Calu3 (cell line): ENCODE measurements at regions of chr5 and their contacts with region 1.

Region 1: GRCh38 chr5:177311723-177312648 is at the start of gene MXD3:
- DNase-seq: peak; percentile 99
- H3K4me3 Mint-ChIP-seq: peak within 1 kb of the TSS; percentile 71
- H3K27ac Mint-ChIP-seq: peak within 1 kb of the TSS; percentile 79
- H3K4me1 Mint-ChIP-seq: peaks cover 42% of the 10 kb centered on the region
- H3K27me3 Mint-ChIP-seq: no peaks in the 10 kb centered on the region
- CTCF ChIP-seq: no peak
- total RNA-seq, gene MXD3: 24.3 and 36.3 TPM in 2 replicates

Region 2: GRCh38 chr5:177336112-177336511 is 24.1 kb after region 1 on chr5:
- CTCF ChIA-PET with region 1: no interaction called
- intact Hi-C with region 1: no loop called
- DNase-seq: peak; percentile 63
- H3K4me3 Mint-ChIP-seq: no peak overlapping the region
- H3K27ac Mint-ChIP-seq: peak overlapping the region; percentile 19
- H3K4me1 Mint-ChIP-seq: peaks cover 31% of the 10 kb centered on the region
- H3K27me3 Mint-ChIP-seq: no peaks in the 10 kb centered on the region
- CTCF ChIP-seq: peak; percentile 61

Region 3: DNA sequence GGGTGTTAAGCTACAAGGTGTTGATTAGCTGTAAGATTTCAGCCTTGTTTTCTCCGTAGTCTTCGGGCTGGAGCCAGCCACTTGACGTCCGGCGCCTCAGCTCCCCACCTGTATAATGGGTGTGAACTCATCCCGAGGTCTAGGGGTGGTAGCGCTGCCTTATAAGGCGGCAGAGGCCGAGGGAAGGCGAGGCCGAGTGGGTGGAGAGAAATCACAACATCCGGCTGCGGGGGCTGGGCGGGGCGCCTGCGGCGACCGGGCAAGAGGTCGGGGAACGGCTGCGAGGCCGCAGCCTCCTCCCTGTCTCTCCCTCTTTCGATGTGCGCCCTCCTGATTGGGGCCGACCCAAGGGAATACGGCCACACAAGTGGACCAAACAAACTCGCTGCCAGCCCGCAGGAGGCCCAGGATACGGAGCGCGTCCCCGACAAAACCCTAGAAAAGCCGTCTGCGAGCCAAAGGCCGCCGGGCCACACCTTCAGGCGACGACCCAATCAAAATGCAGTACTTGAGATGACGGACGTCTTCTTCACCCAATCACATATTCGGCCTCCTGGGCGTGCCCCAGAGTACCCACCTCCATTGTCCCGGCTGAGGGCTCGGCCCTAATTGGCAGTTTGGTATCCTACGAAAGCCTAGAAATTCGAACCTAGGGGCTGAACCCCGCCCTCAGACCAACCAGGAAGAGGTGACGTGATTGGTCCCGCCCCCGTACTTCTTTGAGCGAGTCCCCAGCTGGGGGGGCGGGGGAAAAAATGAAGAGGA is 114.0 kb after region 1 on chr5:
- CTCF ChIA-PET with region 1: interaction called, 10 read pairs
- intact Hi-C with region 1: no loop called
- DNase-seq: peak; percentile 100
- H3K4me3 Mint-ChIP-seq: peak overlapping the region; percentile 93
- H3K27ac Mint-ChIP-seq: peak overlapping the region; percentile 100
- H3K4me1 Mint-ChIP-seq: peaks cover 34% of the 10 kb centered on the region
- H3K27me3 Mint-ChIP-seq: peaks cover 12% of the 10 kb centered on the region
- CTCF ChIP-seq: no peak

Region 4: DNA sequence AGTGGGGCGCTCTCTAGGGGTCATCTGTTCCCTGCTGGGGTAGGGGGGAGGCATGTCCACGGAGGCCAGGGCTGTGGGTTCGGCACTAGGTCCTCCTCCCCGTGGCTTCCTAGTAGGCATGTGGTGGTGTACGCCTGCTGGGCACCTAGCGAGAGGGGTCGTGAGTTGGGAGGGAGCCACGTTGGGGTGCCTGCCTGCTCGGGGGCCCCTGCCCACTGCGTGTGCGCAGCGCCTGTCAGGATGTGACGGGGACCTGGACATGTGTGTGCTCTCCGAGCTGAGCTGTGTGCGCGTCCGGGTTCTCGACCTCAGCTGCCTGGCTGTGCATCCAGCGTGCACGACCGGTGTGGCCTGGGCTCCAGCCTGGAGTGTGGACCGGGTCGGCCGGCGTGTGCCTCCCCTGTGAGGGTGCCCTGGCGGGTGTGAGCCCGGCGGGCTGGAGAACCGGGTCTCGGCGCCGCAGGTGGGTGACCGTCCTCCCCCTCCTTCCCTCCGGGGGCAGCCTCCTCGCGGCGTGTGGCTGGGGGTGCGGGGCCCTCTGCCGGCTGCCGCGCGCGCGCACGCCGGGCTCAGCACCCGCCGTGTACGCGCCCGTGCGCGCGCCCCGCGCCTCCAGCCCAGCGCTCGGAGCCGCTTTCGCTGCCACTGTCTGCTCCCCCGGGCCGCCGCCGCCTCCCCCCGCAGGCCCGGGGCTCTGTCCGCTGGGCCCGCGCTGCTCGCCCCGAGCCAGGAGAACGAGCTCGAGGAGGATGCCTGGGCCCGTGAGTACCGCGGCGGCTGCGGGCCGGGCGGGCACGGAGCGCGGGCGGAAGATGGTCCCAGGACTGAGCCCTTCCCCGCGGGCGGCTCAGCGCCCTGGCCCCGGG is 134.4 kb after region 1 on chr5 and contains the start of gene PRR7:
- CTCF ChIA-PET with region 1: interaction called, 13 read pairs
- intact Hi-C with region 1: loop called (anchors 5 kb)
- DNase-seq: peak; percentile 88
- H3K4me3 Mint-ChIP-seq: peak within 1 kb of the TSS; percentile 70
- H3K27ac Mint-ChIP-seq: peak within 1 kb of the TSS; percentile 81
- H3K4me1 Mint-ChIP-seq: peaks cover 22% of the 10 kb centered on the region
- H3K27me3 Mint-ChIP-seq: no peaks in the 10 kb centered on the region
- CTCF ChIP-seq: no peak
- total RNA-seq, gene PRR7: 25.2 and 27.6 TPM in 2 replicates

Region 5: DNA sequence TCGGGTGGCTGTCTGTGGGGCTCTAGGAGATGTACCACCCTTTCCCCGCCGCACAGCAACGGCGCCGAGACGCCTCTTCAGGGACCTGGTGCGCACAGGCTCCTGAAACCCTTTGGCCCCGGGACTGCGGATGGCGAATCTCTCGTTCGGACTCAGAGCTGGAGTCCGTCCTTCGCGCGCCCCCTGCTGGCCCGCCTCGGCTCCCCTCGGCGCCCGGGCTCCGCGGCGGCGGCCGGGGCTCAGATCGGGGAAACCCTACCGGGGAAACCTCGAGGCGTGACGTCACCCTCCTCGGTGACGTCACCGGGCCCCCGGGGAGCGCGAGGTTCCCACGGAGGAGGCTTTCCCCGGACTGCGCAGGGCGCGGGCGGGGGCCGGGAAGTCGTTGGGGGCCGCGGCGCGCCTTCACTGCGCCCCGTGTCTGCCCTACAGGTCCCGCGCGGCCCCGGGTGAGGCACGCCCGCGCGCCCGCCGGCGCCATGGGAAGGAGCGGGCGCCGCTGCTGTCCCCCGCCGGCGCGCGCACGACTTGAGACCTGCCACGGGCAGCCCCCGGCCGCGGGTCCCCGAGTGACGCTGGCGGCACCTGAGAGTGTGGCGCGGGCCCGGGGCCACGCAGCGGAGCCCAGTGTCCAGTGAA is 142.5 kb after region 1 on chr5:
- CTCF ChIA-PET with region 1: interaction called, 19 read pairs
- intact Hi-C with region 1: loop called (anchors 5 kb)
- DNase-seq: peak; percentile 99
- H3K4me3 Mint-ChIP-seq: peak overlapping the region; percentile 77
- H3K27ac Mint-ChIP-seq: peak overlapping the region; percentile 86
- H3K4me1 Mint-ChIP-seq: peaks cover 40% of the 10 kb centered on the region
- H3K27me3 Mint-ChIP-seq: no peaks in the 10 kb centered on the region
- CTCF ChIP-seq: peak; percentile 96